HCT116 (cell line): ENCODE measurements at regions of chr11 and their contacts with region 1.

Region 1: GRCh38 chr11:85589373-85589772 is 37.8 kb downstream of the DLG2 start:
- DNase-seq: no peak
- ATAC-seq: no peak
- H3K4me3 ChIP-seq: no peak overlapping the region
- H3K27ac ChIP-seq: no peak overlapping the region
- H3K4me1 ChIP-seq: no peaks in the 10 kb centered on the region
- H3K27me3 ChIP-seq: no peaks in the 10 kb centered on the region
- CTCF ChIP-seq: no peak
- POLR2A ChIP-seq: no peak
- RAD21 ChIP-seq: no peak

Region 2: GRCh38 chr11:84800755-84801346 is 788.5 kb before region 1 on chr11:
- CTCF ChIA-PET with region 1: interaction called, 4 read pairs
- POLR2A ChIA-PET with region 1: no interaction called
- RAD21 ChIA-PET with region 1: no interaction called
- intact Hi-C with region 1: loop called (anchors 5 kb)
- DNase-seq: peak; percentile 12
- ATAC-seq: no peak
- H3K4me3 ChIP-seq: no peak overlapping the region
- H3K27ac ChIP-seq: no peak overlapping the region
- H3K4me1 ChIP-seq: no peaks in the 10 kb centered on the region
- H3K27me3 ChIP-seq: no peaks in the 10 kb centered on the region; the same call in 1 of the 2 replicates
- CTCF ChIP-seq: peak; percentile 13 to 44 (median 22); a peak in 3 of 6 replicates
- POLR2A ChIP-seq: no peak
- RAD21 ChIP-seq: peak; percentile 48

Region 3: DNA sequence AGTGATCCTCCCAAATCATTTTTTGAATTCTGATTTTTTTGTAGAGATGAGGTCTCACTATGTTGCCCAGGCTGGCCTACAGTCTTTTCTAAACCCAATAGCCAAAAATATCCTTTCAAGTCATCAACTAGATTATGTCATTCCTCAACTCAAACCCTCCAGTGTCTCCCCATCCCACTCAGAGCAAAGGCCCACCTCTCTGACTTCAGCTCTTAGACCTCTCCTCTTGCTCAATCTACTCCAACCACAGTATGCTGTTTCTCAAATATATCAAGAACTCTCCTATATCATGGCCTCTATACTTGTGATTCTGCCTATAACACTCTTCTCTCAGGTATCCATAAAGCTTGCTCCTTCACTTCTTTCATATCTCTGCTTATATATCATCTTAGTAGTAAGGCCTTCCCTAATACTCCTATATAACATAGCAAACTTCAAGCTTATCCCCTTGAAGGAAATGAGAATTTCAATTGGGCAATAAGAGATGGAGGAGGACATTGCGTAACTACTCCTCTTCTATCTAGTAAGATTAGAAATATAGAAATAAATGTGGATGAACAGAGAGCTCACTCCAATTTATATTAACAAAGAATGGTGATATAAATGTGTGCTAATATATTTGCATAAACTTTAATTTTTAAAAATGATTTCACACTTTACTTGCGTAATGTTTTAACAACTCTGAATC is 13.3 kb after region 1 on chr11:
- CTCF ChIA-PET with region 1: no interaction called
- POLR2A ChIA-PET with region 1: no interaction called
- RAD21 ChIA-PET with region 1: no interaction called
- intact Hi-C with region 1: no loop called
- DNase-seq: no peak
- ATAC-seq: no peak
- H3K4me3 ChIP-seq: no peak overlapping the region
- H3K27ac ChIP-seq: no peak overlapping the region
- H3K4me1 ChIP-seq: no peaks in the 10 kb centered on the region
- H3K27me3 ChIP-seq: no peaks in the 10 kb centered on the region
- CTCF ChIP-seq: no peak
- POLR2A ChIP-seq: no peak
- RAD21 ChIP-seq: no peak

Region 4: DNA sequence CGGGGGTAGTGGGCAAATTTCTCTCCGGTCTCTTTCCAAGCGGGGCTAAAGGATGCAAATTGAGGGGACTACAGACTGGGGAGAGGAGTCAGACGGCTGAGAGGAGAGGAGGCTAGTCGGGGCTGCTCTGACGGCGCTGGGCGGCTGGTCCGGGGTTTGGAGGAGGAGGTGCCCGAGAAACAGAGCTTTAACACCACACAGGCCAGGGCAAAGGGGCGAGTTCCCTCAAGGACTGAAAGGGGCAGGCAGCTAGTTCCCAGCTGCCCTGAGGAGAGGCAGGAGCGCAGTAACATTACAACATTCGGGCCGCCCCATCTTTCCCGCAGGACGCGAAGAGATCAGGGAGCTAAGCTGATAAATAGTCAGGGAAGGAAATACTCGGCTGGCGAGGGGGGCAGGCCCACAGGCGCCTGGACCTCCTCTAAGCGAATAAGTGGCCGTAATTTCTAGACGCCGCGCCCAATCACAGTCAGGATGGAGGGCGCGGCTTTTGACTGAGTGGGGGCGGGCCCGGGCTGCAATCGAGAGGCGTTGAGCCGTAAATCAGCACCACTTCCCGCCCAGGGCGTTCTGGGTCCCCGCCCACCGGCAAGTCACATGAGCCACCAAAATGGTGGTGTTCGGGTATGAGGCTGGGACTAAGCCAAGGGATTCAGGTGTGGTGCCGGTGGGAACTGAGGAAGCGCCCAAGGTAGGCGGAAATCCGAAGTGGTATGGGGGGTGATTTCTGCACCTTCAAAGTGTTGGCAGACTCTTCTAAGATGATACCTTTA is 38.8 kb after region 1 on chr11 and contains the start of gene TMEM126B:
- CTCF ChIA-PET with region 1: no interaction called
- POLR2A ChIA-PET with region 1: no interaction called
- RAD21 ChIA-PET with region 1: no interaction called
- intact Hi-C with region 1: no loop called
- DNase-seq: peak; percentile 91
- ATAC-seq: peak; percentile 99
- H3K4me3 ChIP-seq: peak within 1 kb of the TSS; percentile 79 to 95
- H3K27ac ChIP-seq: peak within 1 kb of the TSS; percentile 47
- H3K4me1 ChIP-seq: peaks cover 6 to 19% of the 10 kb centered on the region in 2 experiments; a peak in 3 of 4 replicates
- H3K27me3 ChIP-seq: no peaks in the 10 kb centered on the region
- CTCF ChIP-seq: no peak
- POLR2A ChIP-seq: peak; percentile 81
- RAD21 ChIP-seq: no peak
- total RNA-seq, gene TMEM126B: 49.0 TPM